AG04450 (cell line): ENCODE measurements at regions of chr6 and their contacts with region 1.

Region 1: GRCh38 chr6:110682460-110682853 is 132.8 kb downstream of the CDK19 start:
- DNase-seq: peak; percentile 47
- H3K4me3 ChIP-seq: no peak overlapping the region
- H3K27ac ChIP-seq: no peak overlapping the region
- H3K27me3 ChIP-seq: no peaks in the 10 kb centered on the region
- CTCF ChIP-seq: peak; percentile 74

Region 2: GRCh38 chr6:110841266-110841665 is 158.8 kb after region 1 on chr6:
- CTCF ChIA-PET with region 1: no interaction called
- POLR2A ChIA-PET with region 1: no interaction called
- DNase-seq: no peak
- H3K4me3 ChIP-seq: no peak overlapping the region
- H3K27ac ChIP-seq: no peak overlapping the region
- H3K27me3 ChIP-seq: no peaks in the 10 kb centered on the region
- CTCF ChIP-seq: no peak

Region 3: GRCh38 chr6:110944681-110945151 is 262.3 kb after region 1 on chr6:
- CTCF ChIA-PET with region 1: interaction called, 47 read pairs
- POLR2A ChIA-PET with region 1: no interaction called
- DNase-seq: peak; percentile 34
- H3K4me3 ChIP-seq: no peak overlapping the region
- H3K27ac ChIP-seq: peak overlapping the region; percentile 39
- H3K27me3 ChIP-seq: no peaks in the 10 kb centered on the region
- CTCF ChIP-seq: no peak

Region 4: GRCh38 chr6:110949679-110950285 is 267.3 kb after region 1 on chr6:
- CTCF ChIA-PET with region 1: interaction called, 47 read pairs
- POLR2A ChIA-PET with region 1: no interaction called
- DNase-seq: no peak
- H3K4me3 ChIP-seq: no peak overlapping the region
- H3K27ac ChIP-seq: no peak overlapping the region
- H3K27me3 ChIP-seq: no peaks in the 10 kb centered on the region
- CTCF ChIP-seq: peak; percentile 55

Region 5: DNA sequence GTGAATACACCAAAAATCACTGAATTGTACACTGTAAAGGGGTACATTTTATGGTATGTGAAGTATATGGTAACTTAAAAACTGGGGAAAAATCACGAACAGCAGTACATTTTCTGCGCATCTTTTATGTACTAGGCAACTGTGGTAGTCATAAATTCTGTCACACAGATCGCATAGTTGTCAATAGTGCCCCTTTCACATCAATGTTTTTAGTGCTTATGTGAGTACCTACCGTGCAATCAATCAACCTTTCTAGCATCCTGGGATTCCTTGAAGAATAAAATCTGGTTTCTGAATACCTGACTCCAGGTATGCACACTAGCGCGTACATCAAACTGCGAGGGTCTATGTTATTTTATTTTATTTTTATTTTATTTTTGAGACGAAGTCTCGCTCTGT is 298.7 kb after region 1 on chr6:
- CTCF ChIA-PET with region 1: interaction called, 18 read pairs
- POLR2A ChIA-PET with region 1: no interaction called
- DNase-seq: no peak
- H3K4me3 ChIP-seq: peak overlapping the region; percentile 99
- H3K27ac ChIP-seq: peak overlapping the region; percentile 82
- H3K27me3 ChIP-seq: no peaks in the 10 kb centered on the region
- CTCF ChIP-seq: no peak

Region 6: GRCh38 chr6:110999634-111000270 is 317.3 kb after region 1 on chr6:
- CTCF ChIA-PET with region 1: interaction called, 10 read pairs
- POLR2A ChIA-PET with region 1: no interaction called
- DNase-seq: no peak
- H3K4me3 ChIP-seq: no peak overlapping the region
- H3K27ac ChIP-seq: no peak overlapping the region
- H3K27me3 ChIP-seq: no peaks in the 10 kb centered on the region
- CTCF ChIP-seq: peak; percentile 50